ENCODE measurements at regions of chr9 and their contacts with region 1.

Region 1: GRCh38 chr9:69157751-69158466 is 16.2 kb upstream of the TJP2 start:
- DNase-seq: no peak
- H3K4me3 ChIP-seq: no peak overlapping the region
- H3K27ac ChIP-seq: no peak overlapping the region
- H3K4me1 ChIP-seq: peaks cover 0 to 8% (median 0%) of the 10 kb centered on the region in 4 experiments; a peak in 2 of 7 replicates
- H3K27me3 ChIP-seq: no peaks in the 10 kb centered on the region
- CTCF ChIP-seq: peak; percentile 20 to 37 (median 21)
- EP300 ChIP-seq: no peak
- POLR2A ChIP-seq: no peak
- RAD21 ChIP-seq: peak; percentile 17 to 42; a peak in 3 of 4 replicates

Region 2: DNA sequence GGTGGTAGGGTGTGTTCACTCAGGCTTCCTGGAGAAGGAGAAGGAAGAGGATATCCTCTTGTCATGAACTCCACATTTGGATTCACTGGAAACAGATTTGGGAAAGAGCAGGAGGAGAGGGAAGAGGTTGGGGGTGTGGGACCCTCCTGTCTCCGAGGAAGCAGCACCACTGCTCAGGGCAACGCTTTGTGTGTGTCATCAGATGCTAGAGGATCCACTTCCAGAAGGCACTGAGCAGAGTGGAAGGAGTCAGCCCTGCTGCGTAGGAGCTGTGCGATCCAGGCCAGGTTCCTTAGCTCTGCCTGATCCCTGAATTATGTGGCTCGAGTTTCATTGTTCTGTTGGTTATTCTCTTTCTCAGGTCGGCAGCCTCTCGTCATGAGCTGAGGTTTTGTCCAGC is 21.1 kb before region 1 on chr9:
- CTCF ChIA-PET with region 1: interaction called, 12 read pairs
- POLR2A ChIA-PET with region 1: interaction called, 4 read pairs
- DNase-seq: peak in 1 of 2 experiments; percentile 39
- H3K4me3 ChIP-seq: no peak overlapping the region
- H3K27ac ChIP-seq: 0 out of 2 replicates have a peak overlapping the region, but pooled peaks have one; percentile 29
- H3K4me1 ChIP-seq: peaks cover 0 to 4% (median 2%) of the 10 kb centered on the region in 4 experiments; a peak in 2 of 7 replicates
- H3K27me3 ChIP-seq: no peaks in the 10 kb centered on the region
- CTCF ChIP-seq: no peak
- EP300 ChIP-seq: no peak
- POLR2A ChIP-seq: peak in 1 of 2 experiments; percentile 44; a peak in 1 of 3 replicates
- RAD21 ChIP-seq: no peak

Region 3: GRCh38 chr9:69168709-69169217 is 10.9 kb after region 1 on chr9:
- CTCF ChIA-PET with region 1: interaction called, 34 read pairs
- POLR2A ChIA-PET with region 1: interaction called, 6 read pairs
- DNase-seq: peak in 1 of 2 experiments; percentile 61
- H3K4me3 ChIP-seq: no peak overlapping the region
- H3K27ac ChIP-seq: no peak overlapping the region
- H3K4me1 ChIP-seq: peaks cover 0 to 8% (median 3%) of the 10 kb centered on the region in 4 experiments; a peak in 4 of 7 replicates
- H3K27me3 ChIP-seq: no peaks in the 10 kb centered on the region
- CTCF ChIP-seq: no peak
- EP300 ChIP-seq: no peak
- POLR2A ChIP-seq: no peak
- RAD21 ChIP-seq: no peak

Region 4: GRCh38 chr9:69180670-69181069 is 22.8 kb after region 1 on chr9:
- CTCF ChIA-PET with region 1: interaction called, 24 read pairs
- POLR2A ChIA-PET with region 1: no interaction called
- DNase-seq: no peak
- H3K4me3 ChIP-seq: no peak overlapping the region
- H3K27ac ChIP-seq: no peak overlapping the region
- H3K4me1 ChIP-seq: peaks cover 0 to 7% (median 4%) of the 10 kb centered on the region in 4 experiments; a peak in 5 of 7 replicates
- H3K27me3 ChIP-seq: no peaks in the 10 kb centered on the region
- CTCF ChIP-seq: no peak
- EP300 ChIP-seq: no peak
- POLR2A ChIP-seq: no peak
- RAD21 ChIP-seq: no peak

Region 5: GRCh38 chr9:69186841-69187611 is 29.1 kb after region 1 on chr9:
- CTCF ChIA-PET with region 1: interaction called, 24 read pairs
- POLR2A ChIA-PET with region 1: no interaction called
- DNase-seq: no peak
- H3K4me3 ChIP-seq: no peak overlapping the region
- H3K27ac ChIP-seq: no peak overlapping the region
- H3K4me1 ChIP-seq: peaks cover 0 to 5% (median 0%) of the 10 kb centered on the region in 4 experiments; a peak in 1 of 7 replicates
- H3K27me3 ChIP-seq: no peaks in the 10 kb centered on the region
- CTCF ChIP-seq: no peak
- EP300 ChIP-seq: no peak
- POLR2A ChIP-seq: no peak
- RAD21 ChIP-seq: no peak

Region 6: DNA sequence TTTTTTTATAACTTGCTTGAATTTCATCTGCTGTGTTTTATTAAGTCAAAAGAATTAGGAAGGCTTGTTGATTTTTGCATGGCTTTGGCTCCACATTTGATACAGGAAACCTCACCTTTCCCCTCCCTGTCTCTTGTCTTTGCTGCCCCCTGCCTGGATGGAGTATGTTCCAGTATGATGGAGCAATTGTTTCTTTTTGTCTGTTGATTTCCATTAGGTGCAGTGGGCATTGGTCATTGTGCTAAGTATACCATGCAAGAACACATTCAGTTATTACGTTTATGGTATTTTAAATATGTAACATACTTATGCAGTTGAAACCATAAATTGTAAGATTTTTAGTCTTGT is 35.8 kb after region 1 on chr9:
- CTCF ChIA-PET with region 1: interaction called, 34 read pairs
- POLR2A ChIA-PET with region 1: no interaction called
- DNase-seq: no peak
- H3K4me3 ChIP-seq: no peak overlapping the region
- H3K27ac ChIP-seq: no peak overlapping the region
- H3K4me1 ChIP-seq: peaks cover 0 to 14% (median 2%) of the 10 kb centered on the region in 4 experiments; a peak in 3 of 7 replicates
- H3K27me3 ChIP-seq: no peaks in the 10 kb centered on the region
- CTCF ChIP-seq: peak in 2 of 3 experiments; percentile 20 to 38; a peak in 2 of 4 replicates
- EP300 ChIP-seq: no peak
- POLR2A ChIP-seq: no peak
- RAD21 ChIP-seq: peak; percentile 51 to 62; a peak in 3 of 4 replicates

Region 7: GRCh38 chr9:69199769-69200470 is 42.0 kb after region 1 on chr9:
- CTCF ChIA-PET with region 1: interaction called, 34 read pairs
- POLR2A ChIA-PET with region 1: no interaction called
- DNase-seq: no peak
- H3K4me3 ChIP-seq: no peak overlapping the region
- H3K27ac ChIP-seq: no peak overlapping the region
- H3K4me1 ChIP-seq: peaks cover 6 to 28% (median 16%) of the 10 kb centered on the region in 4 experiments; a peak in 6 of 7 replicates
- H3K27me3 ChIP-seq: no peaks in the 10 kb centered on the region
- CTCF ChIP-seq: peak; percentile 3 to 26 (median 8); a peak in 2 of 4 replicates
- EP300 ChIP-seq: no peak
- POLR2A ChIP-seq: no peak
- RAD21 ChIP-seq: peak; percentile 29 to 42; a peak in 3 of 4 replicates

Measured in H1 (cell line).